ENCODE measurements at regions of chr16 and their contacts with region 1.

Region 1: GRCh38 chr16:31458844-31459721 is at the start of gene ARMC5:
- DNase-seq: peak; percentile 99
- ATAC-seq: peak; percentile 76
- H3K4me3 ChIP-seq: peak within 1 kb of the TSS; percentile 71 to 94 (median 87)
- H3K4me3 Mint-ChIP-seq: peak within 1 kb of the TSS; percentile 94
- H3K27ac ChIP-seq: peak within 1 kb of the TSS; percentile 94 to 99
- H3K27ac Mint-ChIP-seq: peak within 1 kb of the TSS; percentile 100
- H3K4me1 ChIP-seq: peaks cover 29 to 42% of the 10 kb centered on the region in 2 donors
- H3K4me1 Mint-ChIP-seq: peaks cover 50% of the 10 kb centered on the region
- H3K27me3 ChIP-seq: no peaks in the 10 kb centered on the region
- H3K27me3 Mint-ChIP-seq: no peaks in the 10 kb centered on the region
- CTCF ChIP-seq: peak; percentile 57
- total RNA-seq, gene ARMC5: 11.2 and 11.7 TPM in 2 replicates

Region 2: DNA sequence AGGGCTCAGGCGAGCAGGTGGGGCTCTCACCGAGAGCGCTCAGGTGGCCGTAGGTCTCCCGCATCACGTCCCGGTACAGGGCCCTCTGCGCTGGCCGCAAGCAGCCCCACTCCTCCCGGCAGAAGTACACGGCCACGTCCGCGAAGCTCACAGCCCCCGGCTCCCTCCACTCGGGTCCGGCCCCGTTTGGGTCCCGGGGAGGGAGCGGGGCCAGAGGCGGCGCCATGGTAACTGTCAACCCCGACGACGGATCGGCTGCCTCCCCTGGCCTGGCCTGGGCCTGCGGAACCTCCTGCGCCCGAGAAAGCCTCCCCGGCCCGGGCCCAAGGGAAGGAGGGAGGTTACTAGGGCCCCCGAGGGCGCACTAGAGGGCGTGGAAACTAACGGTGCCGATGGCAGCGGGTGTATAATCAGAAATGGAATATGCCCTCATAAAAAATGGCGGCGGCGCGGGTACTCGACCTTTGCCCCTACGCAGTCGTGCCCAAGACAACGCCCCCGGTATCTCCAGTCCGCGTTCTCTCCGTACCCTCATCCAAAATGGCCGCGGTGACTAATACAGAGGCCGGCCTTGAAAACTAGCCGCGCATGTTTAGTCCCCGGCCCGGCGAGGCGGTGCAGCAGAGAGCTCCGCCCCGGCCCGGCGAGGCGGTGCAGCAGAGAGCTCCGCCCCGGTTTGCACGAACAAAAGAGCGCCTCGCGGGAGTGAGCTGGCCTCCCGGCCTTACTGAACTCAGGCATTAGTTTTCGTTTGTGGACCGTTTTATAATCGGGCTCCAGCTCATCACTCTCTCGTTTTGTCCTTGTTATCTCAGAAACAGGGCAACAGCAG is 900.9 kb before region 1 on chr16 and contains the start of gene ZNF764:
- CTCF ChIA-PET with region 1: no interaction called
- POLR2A ChIA-PET with region 1: no interaction called
- intact Hi-C with region 1: loop called (anchors 5 kb)
- DNase-seq: peak; percentile 97
- ATAC-seq: peak; percentile 92
- H3K4me3 ChIP-seq: peak within 1 kb of the TSS in 4 of 5 experiments; percentile 80 to 91 (median 88)
- H3K4me3 Mint-ChIP-seq: peak within 1 kb of the TSS; percentile 86
- H3K27ac ChIP-seq: peak within 1 kb of the TSS; percentile 95 to 97
- H3K27ac Mint-ChIP-seq: peak within 1 kb of the TSS; percentile 91
- H3K4me1 ChIP-seq: peaks cover 14 to 35% of the 10 kb centered on the region in 2 donors
- H3K4me1 Mint-ChIP-seq: peaks cover 42% of the 10 kb centered on the region
- H3K27me3 ChIP-seq: no peaks in the 10 kb centered on the region
- H3K27me3 Mint-ChIP-seq: no peaks in the 10 kb centered on the region
- CTCF ChIP-seq: no peak
- total RNA-seq, gene ZNF764: 19.7 and 20.9 TPM in 2 replicates

Region 3: DNA sequence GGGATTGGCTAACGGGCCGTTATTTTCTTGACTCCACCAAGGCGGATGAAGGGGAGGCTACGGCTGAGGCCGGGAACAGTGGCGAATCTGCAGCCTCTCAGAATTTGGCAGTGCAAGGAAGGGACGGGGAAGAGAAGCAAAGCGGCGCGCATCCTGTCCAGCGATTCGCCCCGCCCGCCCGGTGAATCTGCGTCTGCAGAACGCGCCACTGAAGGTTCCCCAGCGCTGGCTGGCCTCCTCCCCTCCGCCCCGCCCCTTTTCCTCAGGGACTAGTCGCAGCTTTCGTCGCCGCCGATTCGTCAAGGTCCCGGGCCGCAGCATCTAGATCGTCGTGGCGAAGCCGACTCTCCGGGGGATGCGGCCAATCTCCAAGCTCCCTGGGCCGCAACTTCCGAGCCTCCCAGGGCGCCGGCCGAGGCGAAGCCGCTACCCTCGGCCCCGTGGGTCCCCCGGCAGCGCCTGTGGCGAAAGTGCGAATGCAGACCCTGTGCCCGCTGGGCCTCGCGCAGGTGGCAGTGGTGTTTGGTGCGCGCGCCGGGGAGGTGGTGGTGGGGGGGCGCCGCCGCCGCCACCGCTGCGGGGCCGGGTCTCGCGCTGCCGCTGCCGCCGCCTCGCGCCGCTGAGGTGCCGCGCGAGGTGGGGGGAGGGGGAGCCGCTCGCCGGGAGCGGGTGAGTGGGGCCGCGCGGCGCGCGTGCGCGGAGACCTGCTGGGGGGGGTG is 501.5 kb before region 1 on chr16 and contains the start of gene SETD1A:
- CTCF ChIA-PET with region 1: no interaction called
- POLR2A ChIA-PET with region 1: interaction called, 5 read pairs
- intact Hi-C with region 1: loop called (anchors 1 kb)
- DNase-seq: peak; percentile 99
- ATAC-seq: peak; percentile 83
- H3K4me3 ChIP-seq: peak within 1 kb of the TSS; percentile 85 to 99 (median 95)
- H3K4me3 Mint-ChIP-seq: peak within 1 kb of the TSS; percentile 97
- H3K27ac ChIP-seq: peak within 1 kb of the TSS; percentile 92 to 96
- H3K27ac Mint-ChIP-seq: peak within 1 kb of the TSS; percentile 99
- H3K4me1 ChIP-seq: peaks cover 15 to 25% of the 10 kb centered on the region in 2 donors
- H3K4me1 Mint-ChIP-seq: peaks cover 40% of the 10 kb centered on the region
- H3K27me3 ChIP-seq: no peaks in the 10 kb centered on the region
- H3K27me3 Mint-ChIP-seq: no peaks in the 10 kb centered on the region
- CTCF ChIP-seq: no peak
- total RNA-seq, gene SETD1A: 37.2 and 39.5 TPM in 2 replicates

Region 4: DNA sequence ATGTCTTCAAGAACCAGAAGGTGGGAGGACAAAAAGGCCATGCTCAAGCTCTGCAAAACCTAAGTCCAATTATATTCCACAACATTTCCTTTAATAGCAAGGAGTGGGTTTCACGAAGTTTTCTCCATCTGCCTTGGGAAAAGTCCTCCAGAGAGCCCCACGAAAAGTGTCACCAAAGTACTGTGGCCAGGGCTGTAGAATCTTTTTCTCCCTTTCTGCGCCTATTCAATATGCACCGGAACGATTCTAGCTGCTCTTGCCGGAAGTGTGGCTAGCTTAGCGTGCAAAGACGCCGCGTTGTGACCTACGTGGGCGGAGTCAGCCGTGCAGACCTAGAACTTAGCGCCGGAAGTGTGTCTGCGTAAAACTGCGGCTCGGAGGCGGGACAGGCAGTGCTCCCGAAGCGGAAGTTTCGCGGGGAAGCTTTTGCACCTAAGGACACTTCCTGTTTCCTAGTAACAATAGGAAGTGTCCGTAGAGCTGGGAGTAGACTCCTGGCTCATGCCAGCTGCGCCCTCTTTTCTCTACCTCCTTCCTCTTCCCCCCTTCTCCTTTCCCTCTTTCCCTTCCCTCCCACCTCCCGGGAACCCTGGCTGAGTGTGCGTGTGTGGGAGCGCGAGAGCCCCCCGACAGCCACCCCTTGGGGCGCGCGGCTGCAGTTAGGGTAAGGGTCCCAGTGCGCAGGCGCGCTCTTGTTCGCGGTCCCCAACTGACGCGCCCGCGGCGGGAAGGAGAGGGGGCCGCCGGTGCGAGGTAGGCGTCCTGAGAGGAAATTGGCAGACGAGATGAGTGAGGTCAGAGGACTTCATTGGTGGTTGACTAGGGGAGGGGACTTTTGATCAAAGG is 384.9 kb before region 1 on chr16 and contains the starts of genes ZNF646 and ZNF668:
- CTCF ChIA-PET with region 1: no interaction called
- POLR2A ChIA-PET with region 1: interaction called, 12 read pairs
- intact Hi-C with region 1: loop called (anchors 1 kb)
- DNase-seq: peak; percentile 99
- ATAC-seq: peak; percentile 86
- H3K4me3 ChIP-seq: peak within 1 kb of the TSS; percentile 73 to 99 (median 91)
- H3K4me3 Mint-ChIP-seq: peak within 1 kb of the TSS; percentile 95
- H3K27ac ChIP-seq: peak within 1 kb of the TSS; percentile 78 to 89
- H3K27ac Mint-ChIP-seq: peak within 1 kb of the TSS; percentile 96
- H3K4me1 ChIP-seq: peaks cover 20 to 25% of the 10 kb centered on the region in 2 donors
- H3K4me1 Mint-ChIP-seq: peaks cover 36% of the 10 kb centered on the region
- H3K27me3 ChIP-seq: no peaks in the 10 kb centered on the region
- H3K27me3 Mint-ChIP-seq: no peaks in the 10 kb centered on the region
- CTCF ChIP-seq: no peak
- total RNA-seq, gene ZNF646: 45.9 and 51.7 TPM in 2 replicates
- total RNA-seq, gene ZNF668: 11.1 and 12.0 TPM in 2 replicates

Region 5: DNA sequence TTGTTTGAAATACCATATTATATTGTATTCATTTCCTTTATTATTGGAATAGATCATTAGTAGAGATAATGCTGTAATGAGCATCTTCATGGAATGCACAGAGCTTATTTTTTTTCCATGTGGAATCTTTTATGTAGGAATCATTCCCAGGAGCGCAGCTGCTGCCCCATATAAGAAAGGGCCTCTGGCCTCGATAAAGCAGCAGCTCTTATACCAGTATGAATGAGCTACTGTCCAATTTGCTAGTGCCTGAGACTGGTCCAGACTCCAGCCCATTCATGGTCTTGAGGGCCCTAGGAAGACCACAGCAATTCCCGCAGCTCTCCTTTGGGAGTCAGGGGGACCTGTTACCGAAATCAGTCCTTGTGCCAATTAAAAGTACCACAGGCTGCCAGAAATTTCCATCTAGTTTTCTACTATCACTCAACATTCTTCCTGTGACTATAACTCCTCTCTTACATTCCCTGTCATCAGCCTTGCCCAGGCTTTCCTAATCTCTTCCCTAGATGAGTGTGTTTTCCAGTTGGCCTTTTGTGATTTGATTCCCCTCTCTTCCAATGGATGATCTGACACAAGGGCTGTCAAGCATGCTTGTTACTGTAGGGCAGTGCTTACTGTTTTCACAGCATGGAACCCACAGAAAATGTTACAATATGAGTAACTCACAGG is 18.4 kb before region 1 on chr16:
- CTCF ChIA-PET with region 1: interaction called, 43 read pairs
- POLR2A ChIA-PET with region 1: no interaction called
- intact Hi-C with region 1: loop called (anchors 2 kb)
- DNase-seq: no peak
- ATAC-seq: no peak
- H3K4me3 ChIP-seq: no peak overlapping the region
- H3K4me3 Mint-ChIP-seq: no peak overlapping the region
- H3K27ac ChIP-seq: no peak overlapping the region
- H3K27ac Mint-ChIP-seq: no peak overlapping the region
- H3K4me1 ChIP-seq: peaks cover 11 to 12% of the 10 kb centered on the region in 2 donors
- H3K4me1 Mint-ChIP-seq: peaks cover 19% of the 10 kb centered on the region
- H3K27me3 ChIP-seq: peaks cover 0 to 6% (median 2%) of the 10 kb centered on the region in 4 experiments
- H3K27me3 Mint-ChIP-seq: peaks cover 3% of the 10 kb centered on the region
- CTCF ChIP-seq: no peak

Region 6: GRCh38 chr16:31487720-31488467 is 28.8 kb after region 1 on chr16:
- CTCF ChIA-PET with region 1: interaction called, 7 read pairs
- POLR2A ChIA-PET with region 1: no interaction called
- intact Hi-C with region 1: loop called (anchors 1 kb)
- DNase-seq: peak; percentile 76
- ATAC-seq: peak; percentile 92
- H3K4me3 ChIP-seq: peak overlapping the region; percentile 12 to 72 (median 56)
- H3K4me3 Mint-ChIP-seq: peak overlapping the region; percentile 96
- H3K27ac ChIP-seq: no peak overlapping the region
- H3K27ac Mint-ChIP-seq: peak overlapping the region; percentile 79
- H3K4me1 ChIP-seq: peaks cover 10 to 16% of the 10 kb centered on the region in 2 donors
- H3K4me1 Mint-ChIP-seq: peaks cover 12% of the 10 kb centered on the region
- H3K27me3 ChIP-seq: peaks cover 0 to 12% (median 4%) of the 10 kb centered on the region in 4 experiments
- H3K27me3 Mint-ChIP-seq: peaks cover 4% of the 10 kb centered on the region
- CTCF ChIP-seq: no peak

Region 7: GRCh38 chr16:31700526-31701388 is 241.7 kb after region 1 on chr16:
- CTCF ChIA-PET with region 1: interaction called, 3 read pairs
- POLR2A ChIA-PET with region 1: interaction called, 6 read pairs
- intact Hi-C with region 1: loop called (anchors 1 kb)
- DNase-seq: peak; percentile 90
- ATAC-seq: peak; percentile 29
- H3K4me3 ChIP-seq: peak overlapping the region; percentile 53 to 95 (median 80)
- H3K4me3 Mint-ChIP-seq: peak overlapping the region; percentile 92
- H3K27ac ChIP-seq: peak overlapping the region; percentile 62 to 90
- H3K27ac Mint-ChIP-seq: peak overlapping the region; percentile 87
- H3K4me1 ChIP-seq: peaks cover 12 to 23% of the 10 kb centered on the region in 2 donors
- H3K4me1 Mint-ChIP-seq: peaks cover 26% of the 10 kb centered on the region
- H3K27me3 ChIP-seq: no peaks in the 10 kb centered on the region
- H3K27me3 Mint-ChIP-seq: no peaks in the 10 kb centered on the region
- CTCF ChIP-seq: no peak